Activated CD4-positive, alpha-beta T cell treated with anti-CD3 and anti-CD28 coated beads, Interleukin-2, amount 10 ng/mL, durations not matched to agents 7 days and 5 days (primary cell): ENCODE measurements at regions of chr16 and their contacts with region 1.

Region 1: GRCh38 chr16:50354629-50355456 is 13.9 kb downstream of the BRD7 start:
- DNase-seq: no peak
- H3K4me3 Mint-ChIP-seq: no peak overlapping the region
- H3K27ac Mint-ChIP-seq: no peak overlapping the region
- H3K4me1 Mint-ChIP-seq: peaks cover 35% of the 10 kb centered on the region
- H3K27me3 Mint-ChIP-seq: no peaks in the 10 kb centered on the region

Region 2: GRCh38 chr16:50286681-50287080 is 68.2 kb before region 1 on chr16:
- CTCF ChIA-PET with region 1: no interaction called
- POLR2A ChIA-PET with region 1: no interaction called
- DNase-seq: no peak
- H3K4me3 Mint-ChIP-seq: no peak overlapping the region
- H3K27ac Mint-ChIP-seq: no peak overlapping the region
- H3K4me1 Mint-ChIP-seq: peaks cover 50% of the 10 kb centered on the region
- H3K27me3 Mint-ChIP-seq: no peaks in the 10 kb centered on the region

Region 3: DNA sequence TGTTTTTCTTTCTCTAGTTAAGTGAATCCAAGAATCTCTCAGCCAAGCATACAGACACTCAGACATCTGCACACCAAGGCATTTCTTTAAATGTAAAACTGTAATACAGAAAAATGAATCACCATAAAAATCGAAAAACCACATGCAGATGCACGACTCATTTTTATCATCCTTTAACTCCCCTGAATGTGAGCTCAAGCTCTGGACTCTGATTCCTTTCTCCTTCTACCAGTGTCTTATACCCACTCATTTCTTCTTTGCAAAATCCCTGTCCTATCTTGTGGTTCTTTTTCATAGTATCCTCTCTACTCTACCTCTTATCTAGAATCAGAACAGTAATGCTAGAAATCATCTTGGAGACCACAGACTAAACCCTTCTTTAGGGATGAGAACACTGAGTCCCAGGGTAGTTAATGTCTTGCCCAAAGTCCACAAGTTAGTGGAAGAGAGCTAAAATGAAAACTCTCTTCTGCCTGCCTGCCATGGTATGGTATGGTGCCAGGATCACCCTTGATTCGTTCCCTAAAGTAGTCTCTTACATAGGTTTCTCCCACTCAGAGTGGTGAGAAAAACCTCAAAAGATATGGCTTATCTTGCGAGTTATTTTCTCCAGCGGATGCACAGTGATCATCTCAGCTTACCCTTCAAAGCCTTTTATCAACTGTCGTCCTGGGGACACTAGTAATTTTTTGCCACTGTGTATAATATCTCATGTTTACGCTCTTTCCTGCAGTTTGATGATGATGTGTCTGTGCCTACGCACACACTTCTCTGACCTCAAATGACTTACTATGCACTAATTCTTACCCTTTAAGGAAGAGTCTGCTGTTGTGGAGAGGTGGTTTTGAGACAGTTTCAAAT is 16.2 kb before region 1 on chr16:
- CTCF ChIA-PET with region 1: interaction called, 27 read pairs
- POLR2A ChIA-PET with region 1: no interaction called
- DNase-seq: peak; percentile 35
- H3K4me3 Mint-ChIP-seq: peak overlapping the region; percentile 60
- H3K27ac Mint-ChIP-seq: peak overlapping the region; percentile 95
- H3K4me1 Mint-ChIP-seq: peaks cover 73% of the 10 kb centered on the region
- H3K27me3 Mint-ChIP-seq: no peaks in the 10 kb centered on the region

Region 4: GRCh38 chr16:50368410-50369132 is 13.7 kb after region 1 on chr16 and contains the start of gene BRD7:
- CTCF ChIA-PET with region 1: interaction called, 20 read pairs
- POLR2A ChIA-PET with region 1: no interaction called
- DNase-seq: peak; percentile 59
- H3K4me3 Mint-ChIP-seq: peak within 1 kb of the TSS; percentile 87
- H3K27ac Mint-ChIP-seq: peak within 1 kb of the TSS; percentile 92
- H3K4me1 Mint-ChIP-seq: peaks cover 44% of the 10 kb centered on the region
- H3K27me3 Mint-ChIP-seq: no peaks in the 10 kb centered on the region
- total RNA-seq, gene BRD7: 102 to 105 TPM